WTC11 (cell line): ENCODE measurements at regions of chr17 and their contacts with region 1.

Region 1: GRCh38 chr17:33292184-33292980 is 713 bp downstream of the ASIC2 start:
- DNase-seq: peak; percentile 66
- ATAC-seq: peak; percentile 65
- H3K4me3 Mint-ChIP-seq: peak overlapping the region; percentile 69
- H3K27ac Mint-ChIP-seq: no peak overlapping the region
- H3K4me1 Mint-ChIP-seq: peaks cover 9% of the 10 kb centered on the region
- H3K27me3 Mint-ChIP-seq: peaks cover 87% of the 10 kb centered on the region
- CTCF ChIP-seq: peak; percentile 31; the same call in 1 of the 2 replicates

Region 2: DNA sequence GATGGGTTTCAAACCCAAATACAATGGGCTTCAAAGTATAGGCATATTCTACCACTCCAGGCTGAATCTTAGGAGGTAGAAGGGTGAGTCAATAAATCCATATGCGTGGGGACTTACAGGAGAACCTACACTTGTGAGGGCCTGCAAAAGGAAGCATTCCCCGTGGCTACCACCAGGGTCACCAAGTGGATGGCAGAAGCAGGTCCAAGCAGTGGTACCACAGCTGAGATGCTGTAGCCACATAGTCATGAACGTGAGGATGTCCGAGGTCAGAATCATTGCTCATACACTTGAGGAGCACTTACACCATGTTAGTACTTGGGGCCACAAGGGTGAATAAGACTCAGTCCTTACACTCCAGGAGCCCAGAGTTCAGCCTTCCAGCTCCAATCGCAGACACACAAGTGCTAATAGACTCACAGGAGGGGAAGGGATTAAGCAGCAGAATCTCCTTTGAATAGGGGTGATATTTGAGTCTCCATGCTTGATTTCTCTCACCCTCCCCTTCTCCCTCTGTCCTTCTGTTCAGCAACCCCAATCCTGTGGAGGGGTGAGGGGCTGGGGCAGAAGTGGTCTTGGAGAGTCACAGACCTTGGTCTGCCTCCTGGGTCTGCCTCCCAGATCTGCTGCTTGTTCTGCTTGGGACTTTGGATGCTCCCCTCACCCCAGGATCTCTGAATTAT is 43.2 kb after region 1 on chr17:
- CTCF ChIA-PET with region 1: interaction called, 14 read pairs
- POLR2A ChIA-PET with region 1: no interaction called
- DNase-seq: peak; percentile 32
- ATAC-seq: peak; percentile 84
- H3K4me3 Mint-ChIP-seq: no peak overlapping the region
- H3K27ac Mint-ChIP-seq: no peak overlapping the region
- H3K4me1 Mint-ChIP-seq: peaks cover 16% of the 10 kb centered on the region
- H3K27me3 Mint-ChIP-seq: peaks cover 45% of the 10 kb centered on the region
- CTCF ChIP-seq: no peak

Region 3: DNA sequence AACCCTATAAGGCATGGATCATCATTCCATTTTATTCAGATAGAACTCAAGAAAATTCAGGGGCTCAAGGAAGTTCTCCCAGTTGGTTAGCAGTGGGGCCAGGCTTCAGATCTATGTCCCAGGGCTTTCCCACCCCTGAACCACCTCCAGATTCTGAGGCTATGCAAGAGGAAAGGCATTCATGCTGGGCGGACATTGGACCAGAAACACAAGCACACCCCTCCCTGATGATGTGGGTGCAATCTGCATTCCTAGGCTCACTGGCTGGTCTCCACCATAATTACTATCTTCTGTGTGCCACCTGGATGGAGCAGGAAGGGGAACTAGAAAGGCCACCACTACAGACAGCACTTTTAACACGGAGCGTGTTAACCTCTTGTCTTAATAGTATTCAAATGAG is 63.9 kb after region 1 on chr17:
- CTCF ChIA-PET with region 1: no interaction called
- POLR2A ChIA-PET with region 1: no interaction called
- DNase-seq: no peak
- ATAC-seq: no peak
- H3K4me3 Mint-ChIP-seq: no peak overlapping the region
- H3K27ac Mint-ChIP-seq: no peak overlapping the region
- H3K4me1 Mint-ChIP-seq: peaks cover 4% of the 10 kb centered on the region
- H3K27me3 Mint-ChIP-seq: peaks cover 62% of the 10 kb centered on the region
- CTCF ChIP-seq: no peak

Region 4: DNA sequence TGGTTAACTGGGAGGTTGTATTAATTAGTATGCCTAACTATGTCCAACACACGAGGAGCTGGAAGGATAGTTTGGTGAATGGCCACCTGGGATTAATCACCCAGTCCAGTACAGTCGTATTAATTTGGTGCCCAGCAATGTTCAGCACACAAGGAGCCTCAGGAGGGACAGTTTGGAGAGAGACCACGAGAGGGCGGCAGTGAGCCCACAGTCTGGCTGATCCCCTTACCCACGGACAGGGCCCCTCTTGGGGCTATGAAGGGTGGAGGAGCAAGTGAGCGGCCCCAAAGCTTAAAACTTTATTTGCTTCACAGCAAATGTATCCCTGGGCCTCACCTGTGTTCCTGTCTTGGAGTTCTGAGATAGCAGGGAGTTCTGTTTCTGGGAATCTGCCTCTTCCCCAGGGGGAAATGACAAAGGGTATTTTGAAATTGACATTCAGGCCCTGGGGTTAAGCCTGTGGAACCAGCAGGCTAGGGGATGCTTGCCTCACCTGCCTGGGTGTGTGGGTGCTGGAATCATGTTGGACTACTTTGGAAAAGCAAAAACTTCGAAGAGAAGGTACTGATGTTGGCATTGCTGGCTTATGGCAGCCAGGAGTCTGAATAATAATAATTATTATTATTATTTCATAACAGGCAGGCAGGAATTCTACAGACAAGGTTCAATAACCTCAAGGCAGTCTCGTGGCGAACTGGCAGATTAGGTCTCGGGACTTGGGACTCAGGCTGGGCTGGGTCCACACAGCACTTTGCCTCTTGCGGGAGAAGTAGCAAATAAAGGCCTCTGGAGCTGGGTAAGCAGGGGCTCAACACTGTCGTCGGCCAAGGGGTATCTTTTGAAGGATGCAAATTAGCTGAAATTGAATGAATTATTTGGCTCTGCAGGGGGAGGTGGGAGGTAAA is 228.3 kb after region 1 on chr17:
- CTCF ChIA-PET with region 1: interaction called, 55 read pairs
- POLR2A ChIA-PET with region 1: no interaction called
- DNase-seq: peak; percentile 85
- ATAC-seq: peak; percentile 82
- H3K4me3 Mint-ChIP-seq: no peak overlapping the region
- H3K27ac Mint-ChIP-seq: no peak overlapping the region
- H3K4me1 Mint-ChIP-seq: peaks cover 2% of the 10 kb centered on the region; the same call in 1 of the 2 replicates
- H3K27me3 Mint-ChIP-seq: no peaks in the 10 kb centered on the region; the same call in 1 of the 2 replicates
- CTCF ChIP-seq: peak; percentile 70